Natural killer cell (primary cell): ENCODE measurements at regions of chr1 and their contacts with region 1.

Region 1: GRCh38 chr1:62841587-62842169 is 57.7 kb downstream of the ATG4C start:
- DNase-seq: peak in 1 of 2 donors; percentile 77
- ATAC-seq: peak; percentile 54 to 81 (median 58)
- H3K4me3 ChIP-seq: no peak overlapping the region
- H3K4me3 Mint-ChIP-seq: no peak overlapping the region
- H3K27ac ChIP-seq: no peak overlapping the region
- H3K27ac Mint-ChIP-seq: no peak overlapping the region
- H3K4me1 ChIP-seq: no peaks in the 10 kb centered on the region
- H3K4me1 Mint-ChIP-seq: no peaks in the 10 kb centered on the region
- H3K27me3 ChIP-seq: no peaks in the 10 kb centered on the region
- H3K27me3 Mint-ChIP-seq: no peaks in the 10 kb centered on the region
- CTCF ChIP-seq: peak; percentile 97

Region 2: GRCh38 chr1:63442141-63442475 is 600.4 kb after region 1 on chr1:
- intact Hi-C with region 1: loop called (anchors 5 kb)
- DNase-seq: no peak
- ATAC-seq: no peak
- H3K4me3 ChIP-seq: no peak overlapping the region
- H3K4me3 Mint-ChIP-seq: no peak overlapping the region
- H3K27ac ChIP-seq: no peak overlapping the region
- H3K27ac Mint-ChIP-seq: no peak overlapping the region
- H3K4me1 ChIP-seq: no peaks in the 10 kb centered on the region
- H3K4me1 Mint-ChIP-seq: no peaks in the 10 kb centered on the region
- H3K27me3 ChIP-seq: no peaks in the 10 kb centered on the region
- H3K27me3 Mint-ChIP-seq: no peaks in the 10 kb centered on the region
- CTCF ChIP-seq: no peak

Region 3: DNA sequence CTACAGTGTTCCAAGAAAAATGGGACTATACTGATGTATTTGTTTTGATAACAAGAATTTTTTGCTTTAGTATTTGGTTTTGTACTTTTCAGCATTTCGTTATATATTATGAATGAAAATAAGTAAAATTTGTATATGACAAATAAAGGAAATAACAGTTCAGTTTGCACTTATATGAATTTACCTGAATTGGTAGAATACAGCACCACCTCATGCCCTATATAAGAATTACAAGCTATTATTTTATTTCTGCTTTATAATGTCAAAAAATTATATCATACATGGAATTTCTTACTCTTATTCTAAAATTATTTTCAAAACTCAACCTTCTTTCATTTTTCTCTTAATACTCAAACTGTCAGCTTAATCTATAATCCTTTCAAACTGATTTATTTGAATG is 696.3 kb after region 1 on chr1:
- intact Hi-C with region 1: loop called (anchors 5 kb)
- DNase-seq: peak in 1 of 2 donors; percentile 24
- ATAC-seq: no peak
- H3K4me3 ChIP-seq: no peak overlapping the region
- H3K4me3 Mint-ChIP-seq: no peak overlapping the region
- H3K27ac ChIP-seq: no peak overlapping the region
- H3K27ac Mint-ChIP-seq: no peak overlapping the region
- H3K4me1 ChIP-seq: no peaks in the 10 kb centered on the region
- H3K4me1 Mint-ChIP-seq: no peaks in the 10 kb centered on the region
- H3K27me3 ChIP-seq: no peaks in the 10 kb centered on the region
- H3K27me3 Mint-ChIP-seq: no peaks in the 10 kb centered on the region
- CTCF ChIP-seq: peak; percentile 69